ENCODE measurements at regions of chr1 and their contacts with region 1.

Region 1: DNA sequence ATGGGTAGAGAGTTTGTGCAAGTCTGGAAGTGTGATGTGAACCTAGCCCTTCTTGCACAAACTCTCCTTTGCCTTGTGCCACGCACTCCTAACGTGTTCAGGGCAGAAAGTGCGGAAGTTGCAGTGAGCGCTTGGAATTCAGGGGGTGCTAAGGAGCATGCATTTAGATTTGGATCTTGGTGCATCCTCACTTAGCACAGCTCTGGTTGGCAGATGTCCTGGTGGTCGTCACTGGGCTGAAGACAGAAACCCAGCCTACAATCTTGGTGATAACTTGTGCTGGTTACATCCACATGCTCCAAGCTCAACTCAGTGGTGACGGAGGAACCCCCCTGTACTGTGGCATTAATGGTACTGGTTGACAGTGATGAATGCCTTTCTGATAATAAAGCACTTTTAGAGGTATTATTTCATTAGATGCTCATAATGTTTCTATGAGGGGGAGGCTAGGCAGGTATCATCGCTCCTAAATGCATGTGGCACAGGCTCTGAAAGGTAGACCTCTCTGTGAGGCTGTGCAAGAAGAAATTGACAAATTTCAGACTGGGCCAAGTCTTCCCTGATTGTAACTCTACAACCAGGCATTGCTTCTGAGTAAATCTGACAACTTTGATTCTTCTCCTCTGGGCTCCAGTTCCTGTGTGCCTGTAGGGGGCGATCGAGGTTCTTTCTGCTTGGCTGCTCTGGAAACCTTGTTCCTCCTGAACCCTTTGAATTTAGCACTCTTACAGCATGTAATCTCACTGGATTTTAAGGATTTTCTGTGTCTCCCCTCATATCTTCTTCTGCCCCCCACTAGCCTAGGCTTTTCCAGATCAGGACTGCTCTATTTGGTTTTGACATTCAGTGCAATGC is 40.6 kb downstream of the MAPKAPK2 start:
- DNase-seq: peak; percentile 67
- H3K4me3 ChIP-seq: no peak overlapping the region; a peak in 1 of 4 replicates
- H3K27ac ChIP-seq: no peak overlapping the region
- H3K4me1 ChIP-seq: peaks cover 0 to 10% of the 10 kb centered on the region in 2 experiments; a peak in 1 of 4 replicates
- H3K27me3 ChIP-seq: no peaks in the 10 kb centered on the region
- CTCF ChIP-seq: peak; percentile 65
- EP300 ChIP-seq: no peak
- RAD21 ChIP-seq: peak; percentile 52

Region 2: GRCh38 chr1:206479183-206480125 is 245.9 kb before region 1 on chr1:
- CTCF ChIA-PET with region 1: no interaction called
- POLR2A ChIA-PET with region 1: no interaction called
- DNase-seq: peak; percentile 89
- H3K4me3 ChIP-seq: no peak overlapping the region
- H3K27ac ChIP-seq: no peak overlapping the region
- H3K4me1 ChIP-seq: peaks cover 12% of the 10 kb centered on the region in 2 experiments; a peak in 3 of 4 replicates
- H3K27me3 ChIP-seq: no peaks in the 10 kb centered on the region
- CTCF ChIP-seq: peak; percentile 80
- EP300 ChIP-seq: no peak
- RAD21 ChIP-seq: peak; percentile 85

Region 3: GRCh38 chr1:206700445-206701036 is 24.8 kb before region 1 on chr1:
- CTCF ChIA-PET with region 1: interaction called, 10 read pairs
- POLR2A ChIA-PET with region 1: interaction called, 3 read pairs
- DNase-seq: no peak
- H3K4me3 ChIP-seq: no peak overlapping the region
- H3K27ac ChIP-seq: no peak overlapping the region
- H3K4me1 ChIP-seq: peaks cover 10 to 23% of the 10 kb centered on the region in 2 experiments; a peak in 2 of 4 replicates
- H3K27me3 ChIP-seq: no peaks in the 10 kb centered on the region
- CTCF ChIP-seq: no peak
- EP300 ChIP-seq: no peak
- RAD21 ChIP-seq: no peak

Region 4: DNA sequence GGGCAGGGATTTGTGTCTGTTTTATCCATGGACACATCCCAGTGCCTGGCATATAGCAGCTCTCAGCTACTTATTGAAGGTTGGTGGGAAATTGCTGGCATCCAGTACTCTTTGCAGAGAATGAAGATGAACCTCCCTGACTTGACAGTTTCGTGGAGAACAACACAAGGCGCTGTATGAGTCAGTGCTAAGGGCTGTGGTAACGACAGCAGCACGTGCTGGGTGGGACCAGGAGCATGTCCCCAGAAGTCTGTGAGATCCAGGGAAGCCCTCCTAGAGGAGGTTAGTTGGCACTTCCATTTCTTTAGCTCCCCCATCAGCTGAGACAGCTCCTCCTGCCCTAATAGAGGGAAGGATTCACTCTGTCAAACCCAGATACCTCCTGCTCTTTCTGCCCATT is 19.3 kb after region 1 on chr1:
- CTCF ChIA-PET with region 1: interaction called, 16 read pairs
- POLR2A ChIA-PET with region 1: no interaction called
- DNase-seq: no peak
- H3K4me3 ChIP-seq: no peak overlapping the region
- H3K27ac ChIP-seq: no peak overlapping the region
- H3K4me1 ChIP-seq: no peaks in the 10 kb centered on the region
- H3K27me3 ChIP-seq: no peaks in the 10 kb centered on the region
- CTCF ChIP-seq: no peak
- EP300 ChIP-seq: no peak
- RAD21 ChIP-seq: no peak

Region 5: DNA sequence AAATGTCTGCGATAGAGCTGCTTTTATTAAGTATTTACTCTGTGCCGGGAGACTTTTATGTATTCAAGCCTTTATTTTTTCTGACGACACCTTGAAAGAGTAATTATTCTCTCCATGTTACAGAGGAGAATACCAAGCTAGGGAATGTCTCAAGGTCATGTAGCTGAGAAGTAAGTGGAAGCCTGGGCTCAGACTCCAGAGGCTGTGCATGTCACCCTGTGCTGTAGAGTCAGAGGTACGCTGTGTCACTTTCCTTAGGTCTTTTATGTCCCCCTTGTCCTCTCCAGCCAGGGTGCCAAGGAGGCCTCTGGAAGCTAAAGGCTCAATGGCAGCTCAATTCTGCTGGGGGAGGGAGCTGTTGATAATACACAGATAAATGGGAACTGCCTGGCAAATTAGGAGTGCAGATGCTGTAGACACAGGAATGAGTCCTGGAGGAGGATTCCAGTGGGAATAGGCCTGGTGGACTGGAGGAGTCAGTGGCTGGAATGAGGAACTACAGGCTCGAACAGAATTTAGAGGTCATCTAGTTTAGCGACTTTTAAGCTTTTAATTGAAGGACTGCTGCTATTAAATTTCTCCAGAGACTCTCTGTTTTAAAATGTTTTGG is 35.9 kb after region 1 on chr1:
- CTCF ChIA-PET with region 1: interaction called, 27 read pairs
- POLR2A ChIA-PET with region 1: no interaction called
- DNase-seq: peak; percentile 59
- H3K4me3 ChIP-seq: no peak overlapping the region
- H3K27ac ChIP-seq: no peak overlapping the region
- H3K4me1 ChIP-seq: peaks cover 0 to 7% of the 10 kb centered on the region in 2 experiments; a peak in 2 of 4 replicates
- H3K27me3 ChIP-seq: no peaks in the 10 kb centered on the region; the same call in 1 of the 2 replicates
- CTCF ChIP-seq: peak; percentile 32; the same call in 1 of the 2 replicates
- EP300 ChIP-seq: peak in 1 of 2 experiments; percentile 54; a peak in 2 of 4 replicates
- RAD21 ChIP-seq: peak; percentile 36; the same call in 1 of the 2 replicates

Region 6: GRCh38 chr1:206905280-206906164 is 180.2 kb after region 1 on chr1:
- CTCF ChIA-PET with region 1: interaction called, 42 read pairs
- POLR2A ChIA-PET with region 1: no interaction called
- DNase-seq: no peak
- H3K4me3 ChIP-seq: no peak overlapping the region
- H3K27ac ChIP-seq: no peak overlapping the region; a peak in 1 of 4 replicates
- H3K4me1 ChIP-seq: peaks cover 0 to 10% of the 10 kb centered on the region in 2 experiments; a peak in 1 of 4 replicates
- H3K27me3 ChIP-seq: peaks cover 6% of the 10 kb centered on the region; the same call in 1 of the 2 replicates
- CTCF ChIP-seq: no peak
- EP300 ChIP-seq: no peak
- RAD21 ChIP-seq: no peak

Measured in SK-N-SH (cell line).